Heart right ventricle (tissue), 16 donors: ENCODE measurements at regions of chr18 and their contacts with region 1.

Region 1: GRCh38 chr18:62131301-62131909 is 55.5 kb downstream of the PIGN start:
- DNase-seq: peak; percentile 11 to 66
- ATAC-seq: peak in 6 of 8 donors; percentile 46 to 79 (median 58)
- H3K4me3 ChIP-seq: no peak overlapping the region
- H3K27ac ChIP-seq: no peak overlapping the region
- H3K4me1 ChIP-seq: no peaks in the 10 kb centered on the region
- H3K27me3 ChIP-seq: no peaks in the 10 kb centered on the region
- CTCF ChIP-seq: peak; percentile 89 to 98 (median 94)

Region 2: DNA sequence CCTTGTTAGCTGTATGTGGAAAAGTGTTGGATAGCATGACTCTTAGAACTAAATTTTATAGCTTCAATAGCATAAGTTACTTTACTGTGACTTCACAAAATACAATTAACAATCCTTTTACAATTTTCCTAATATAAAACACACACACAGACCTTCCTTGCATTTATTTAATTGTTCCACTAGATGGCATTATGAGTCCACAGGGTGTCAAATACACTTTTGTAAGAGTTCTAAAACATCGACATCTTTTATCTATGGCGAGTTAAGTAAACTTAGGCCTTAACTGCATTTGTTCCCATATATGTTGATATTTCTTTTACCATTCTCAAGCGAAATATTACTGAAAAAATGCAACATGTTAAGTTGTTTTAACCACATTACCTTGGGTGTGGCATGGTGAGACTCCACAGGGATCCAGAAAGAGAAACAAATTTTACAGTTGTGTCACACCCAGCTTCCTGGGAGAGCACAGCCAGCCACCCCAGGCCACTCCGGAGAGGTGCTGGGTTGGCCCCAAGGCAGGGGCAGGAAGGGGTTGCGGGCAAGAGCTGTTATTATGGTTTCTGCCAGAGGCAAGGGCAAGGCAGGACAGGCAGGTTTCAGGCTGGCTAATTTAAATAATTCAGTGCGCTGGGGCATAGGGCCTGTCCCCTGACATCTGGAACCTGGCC is 1446.4 kb before region 1 on chr18:
- intact Hi-C with region 1: loop called in 1 of 10 experiments (anchors 10 kb)
- DNase-seq: no peak
- ATAC-seq: no peak
- H3K4me3 ChIP-seq: no peak overlapping the region
- H3K27ac ChIP-seq: no peak overlapping the region
- H3K4me1 ChIP-seq: peaks cover 0 to 4% (median 0%) of the 10 kb centered on the region in 9 donors
- H3K27me3 ChIP-seq: peaks cover 0 to 3% (median 0%) of the 10 kb centered on the region in 7 donors
- CTCF ChIP-seq: peak; percentile 40 to 78 (median 71)

Region 3: DNA sequence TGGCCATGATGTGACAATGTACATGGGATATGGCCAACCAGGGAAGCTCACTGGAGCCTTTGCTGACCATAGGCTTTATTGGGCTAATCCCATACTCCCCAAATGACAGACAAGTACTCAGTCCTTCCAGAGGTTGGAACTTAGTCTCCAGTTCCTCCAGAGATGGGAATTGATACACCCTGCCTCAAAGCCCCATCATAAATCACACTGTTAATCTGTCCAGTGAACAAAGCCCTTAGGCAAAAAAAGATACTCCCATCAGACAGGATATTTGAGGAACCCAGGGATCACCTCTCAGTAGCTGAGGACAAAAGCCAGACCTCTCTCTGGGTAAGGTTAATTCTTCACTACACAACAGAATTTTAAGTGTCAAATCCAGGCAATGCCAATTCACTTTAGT is 1045.6 kb before region 1 on chr18:
- intact Hi-C with region 1: loop called in 2 of 10 experiments (anchors 5 kb)
- DNase-seq: no peak
- ATAC-seq: no peak
- H3K4me3 ChIP-seq: no peak overlapping the region
- H3K27ac ChIP-seq: no peak overlapping the region
- H3K4me1 ChIP-seq: no peaks in the 10 kb centered on the region
- H3K27me3 ChIP-seq: no peaks in the 10 kb centered on the region
- CTCF ChIP-seq: no peak

Region 4: GRCh38 chr18:61502472-61502871 is 628.9 kb before region 1 on chr18:
- intact Hi-C with region 1: loop called in 1 of 10 experiments (anchors 2 kb)
- DNase-seq: peak in 1 of 2 donors; percentile 44
- ATAC-seq: peak in 6 of 8 donors; percentile 50 to 62 (median 56)
- H3K4me3 ChIP-seq: no peak overlapping the region
- H3K27ac ChIP-seq: no peak overlapping the region
- H3K4me1 ChIP-seq: peaks cover 0 to 3% (median 0%) of the 10 kb centered on the region in 9 donors
- H3K27me3 ChIP-seq: peaks cover 0 to 9% (median 0%) of the 10 kb centered on the region in 7 donors
- CTCF ChIP-seq: peak; percentile 31 to 78 (median 68)

Region 5: GRCh38 chr18:61581578-61582201 is 549.7 kb before region 1 on chr18:
- intact Hi-C with region 1: loop called in 1 of 10 experiments (anchors 10 kb)
- DNase-seq: peak; percentile 77 to 82
- ATAC-seq: peak; percentile 90 to 96 (median 92)
- H3K4me3 ChIP-seq: peak overlapping the region; percentile 26 to 66 (median 49)
- H3K27ac ChIP-seq: peak overlapping the region; percentile 24 to 77 (median 66)
- H3K4me1 ChIP-seq: peaks cover 0 to 53% (median 25%) of the 10 kb centered on the region in 9 donors
- H3K27me3 ChIP-seq: peaks cover 0 to 6% (median 0%) of the 10 kb centered on the region in 7 donors
- CTCF ChIP-seq: peak; percentile 97 to 99 (median 98)

Region 6: DNA sequence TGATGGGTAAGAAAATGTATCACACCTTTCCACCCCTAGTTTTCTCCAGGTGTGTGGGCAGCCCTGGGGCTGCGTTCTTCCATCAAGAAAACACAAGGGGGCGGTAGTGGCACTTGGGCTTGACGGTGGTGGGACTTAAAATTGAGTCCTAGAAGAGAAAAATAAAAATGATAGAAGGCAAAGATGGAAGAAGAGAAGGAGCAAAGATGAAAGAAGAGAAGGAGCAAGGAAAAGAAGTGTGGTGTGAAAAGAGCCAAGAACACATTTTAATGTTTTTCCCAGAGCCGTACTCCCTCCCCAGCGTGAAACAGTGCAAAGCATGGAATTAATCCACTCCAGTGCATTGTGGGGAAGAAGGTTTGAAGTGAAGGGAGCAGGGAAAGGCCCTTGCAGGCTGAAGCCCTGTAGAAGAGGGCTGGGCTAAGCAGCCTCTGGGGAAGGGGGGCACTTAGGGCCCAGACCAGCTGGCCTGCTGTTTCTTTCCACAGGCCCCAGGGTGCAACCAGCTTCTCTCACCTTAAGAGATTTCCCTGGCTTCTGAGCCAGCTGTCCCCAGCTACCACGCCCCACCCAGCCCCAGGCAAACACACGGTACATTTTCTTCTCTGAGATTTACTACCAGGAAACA is 495.4 kb before region 1 on chr18:
- intact Hi-C with region 1: loop called in 7 of 10 experiments (anchors 1 to 5 kb)
- DNase-seq: peak; percentile 32 to 57
- ATAC-seq: peak; percentile 77 to 89 (median 85)
- H3K4me3 ChIP-seq: peak overlapping the region in 4 of 10 donors; percentile 9 to 21 (median 12)
- H3K27ac ChIP-seq: peak overlapping the region in 9 of 10 donors; percentile 1 to 73 (median 66)
- H3K4me1 ChIP-seq: peaks cover 0 to 24% (median 10%) of the 10 kb centered on the region in 9 donors
- H3K27me3 ChIP-seq: no peaks in the 10 kb centered on the region
- CTCF ChIP-seq: peak; percentile 87 to 95 (median 91)

Region 7: GRCh38 chr18:61893971-61894750 is 237.2 kb before region 1 on chr18:
- intact Hi-C with region 1: loop called in 4 of 10 experiments (anchors 5 to 10 kb)
- DNase-seq: peak; percentile 87
- ATAC-seq: peak; percentile 90 to 96 (median 94)
- H3K4me3 ChIP-seq: peak overlapping the region; percentile 32 to 97 (median 90)
- H3K27ac ChIP-seq: peak overlapping the region; percentile 79 to 96 (median 90)
- H3K4me1 ChIP-seq: peaks cover 0 to 50% (median 31%) of the 10 kb centered on the region in 9 donors
- H3K27me3 ChIP-seq: peaks cover 0 to 61% (median 0%) of the 10 kb centered on the region in 7 donors
- CTCF ChIP-seq: peak; percentile 16 to 71 (median 37)

Region 8: DNA sequence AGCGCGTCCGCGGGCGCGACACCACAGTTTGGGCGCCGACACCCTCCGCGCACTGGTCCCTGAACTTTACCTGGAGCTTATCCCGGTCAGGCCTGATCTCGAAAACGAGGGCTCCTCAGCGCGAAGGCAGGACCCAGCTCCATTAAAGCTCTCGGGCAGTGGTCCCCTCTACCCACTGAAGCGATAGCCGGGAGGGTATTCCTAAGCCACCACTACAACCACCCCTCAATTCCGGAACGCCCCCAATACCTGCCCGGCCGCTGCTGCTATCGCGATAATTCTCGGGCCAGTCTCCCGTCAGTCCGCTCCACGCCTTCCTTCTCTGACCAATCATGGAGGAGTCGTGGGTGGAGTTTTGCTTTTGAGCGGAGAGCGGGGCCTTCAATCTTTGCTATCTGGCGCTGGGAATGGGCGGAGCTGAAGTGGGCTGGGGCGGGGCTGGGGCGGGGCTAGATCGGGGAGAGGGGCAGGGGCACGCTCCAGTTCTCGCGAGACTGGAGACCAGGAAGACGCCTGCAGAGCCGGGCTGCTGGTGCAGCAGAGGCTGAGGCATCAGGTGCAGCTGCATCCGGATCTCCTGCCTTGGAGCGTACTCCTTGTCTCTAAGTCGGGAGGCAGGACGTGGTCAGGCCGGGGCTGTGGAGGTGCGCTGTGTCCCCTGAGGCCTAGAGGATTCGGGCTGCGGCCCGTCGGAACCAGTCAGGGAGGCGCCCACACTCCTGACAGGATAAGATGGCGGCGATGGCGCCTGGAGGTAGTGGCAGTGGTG is 55.6 kb after region 1 on chr18 and contains the starts of genes PIGN and RELCH:
- intact Hi-C with region 1: no loop called
- DNase-seq: peak; percentile 90 to 98
- ATAC-seq: peak; percentile 98 to 99 (median 99)
- H3K4me3 ChIP-seq: peak within 1 kb of the TSS; percentile 72 to 100 (median 94)
- H3K27ac ChIP-seq: peak within 1 kb of the TSS; percentile 56 to 91 (median 83)
- H3K4me1 ChIP-seq: peaks cover 0 to 53% (median 31%) of the 10 kb centered on the region in 9 donors
- H3K27me3 ChIP-seq: no peaks in the 10 kb centered on the region
- CTCF ChIP-seq: no peak
- total RNA-seq, gene PIGN: 14.4 to 31.6 (median 21.2) TPM
- total RNA-seq, gene RELCH: 12.1 to 21.0 (median 16.5) TPM